SK-N-SH (cell line): ENCODE measurements at regions of chr6 and their contacts with region 1.

Region 1: DNA sequence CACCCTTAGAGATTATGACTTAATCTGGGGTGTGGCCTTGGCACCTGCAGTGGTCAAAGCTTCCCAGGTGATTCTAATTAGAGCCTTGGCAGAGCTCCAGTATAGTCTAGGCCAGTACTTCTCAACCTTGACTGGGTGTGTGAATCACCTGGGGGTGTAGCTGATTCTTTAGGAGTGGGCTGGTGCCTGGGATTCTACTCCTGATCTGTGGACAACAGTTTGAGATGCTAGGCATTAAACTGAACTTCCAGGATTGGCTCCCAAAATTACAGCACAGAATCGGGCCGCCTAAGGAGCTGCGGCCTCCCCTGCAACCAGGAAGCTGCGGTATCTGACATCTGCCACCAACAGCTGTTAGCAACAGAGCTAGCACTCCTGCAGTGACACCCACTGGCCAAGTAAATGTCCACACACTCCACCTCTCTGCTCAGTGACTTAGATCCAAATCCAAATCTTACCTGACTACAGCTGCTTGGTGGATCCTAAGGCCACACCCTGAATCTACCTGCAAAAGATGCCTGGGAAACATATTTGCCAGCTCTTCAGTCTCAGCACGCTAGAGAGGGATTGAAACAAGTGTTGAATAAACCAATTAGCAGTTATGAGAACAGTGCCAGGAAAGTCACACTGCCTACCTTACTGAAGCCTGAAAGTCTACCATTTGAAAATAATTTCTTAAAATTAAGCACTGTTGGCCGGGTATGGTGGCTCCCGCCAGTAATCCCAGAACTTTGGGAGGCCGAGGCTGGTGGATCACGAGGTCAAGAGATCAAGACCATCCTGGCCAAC is 126.7 kb downstream of the UNC5CL start:
- DNase-seq: peak; percentile 81
- H3K4me3 ChIP-seq: no peak overlapping the region; a peak in 1 of 4 replicates
- H3K27ac ChIP-seq: no peak overlapping the region; a peak in 1 of 4 replicates
- H3K4me1 ChIP-seq: peaks cover 4 to 9% of the 10 kb centered on the region in 2 experiments; a peak in 2 of 4 replicates
- H3K27me3 ChIP-seq: no peaks in the 10 kb centered on the region
- CTCF ChIP-seq: peak; percentile 48
- EP300 ChIP-seq: no peak
- RAD21 ChIP-seq: peak; percentile 93

Region 2: GRCh38 chr6:40719671-40720374 is 192.5 kb before region 1 on chr6:
- CTCF ChIA-PET with region 1: interaction called, 10 read pairs
- POLR2A ChIA-PET with region 1: no interaction called
- DNase-seq: peak; percentile 56
- H3K4me3 ChIP-seq: peak overlapping the region in 1 of 2 experiments; percentile 13; a peak in 2 of 4 replicates
- H3K27ac ChIP-seq: peak overlapping the region; percentile 47 to 99
- H3K4me1 ChIP-seq: peaks cover 15 to 70% of the 10 kb centered on the region in 2 experiments; a peak in 3 of 4 replicates
- H3K27me3 ChIP-seq: no peaks in the 10 kb centered on the region
- CTCF ChIP-seq: no peak
- EP300 ChIP-seq: peak in 1 of 2 experiments; percentile 80; a peak in 2 of 4 replicates
- RAD21 ChIP-seq: no peak; the same call in none of the 2 replicates

Region 3: GRCh38 chr6:40894962-40895799 is 17.2 kb before region 1 on chr6:
- CTCF ChIA-PET with region 1: interaction called, 26 read pairs
- POLR2A ChIA-PET with region 1: no interaction called
- DNase-seq: peak; percentile 36
- H3K4me3 ChIP-seq: no peak overlapping the region
- H3K27ac ChIP-seq: no peak overlapping the region
- H3K4me1 ChIP-seq: peaks cover 0 to 6% of the 10 kb centered on the region in 2 experiments; a peak in 1 of 4 replicates
- H3K27me3 ChIP-seq: no peaks in the 10 kb centered on the region
- CTCF ChIP-seq: peak; percentile 68
- EP300 ChIP-seq: no peak
- RAD21 ChIP-seq: peak; percentile 54

Region 4: DNA sequence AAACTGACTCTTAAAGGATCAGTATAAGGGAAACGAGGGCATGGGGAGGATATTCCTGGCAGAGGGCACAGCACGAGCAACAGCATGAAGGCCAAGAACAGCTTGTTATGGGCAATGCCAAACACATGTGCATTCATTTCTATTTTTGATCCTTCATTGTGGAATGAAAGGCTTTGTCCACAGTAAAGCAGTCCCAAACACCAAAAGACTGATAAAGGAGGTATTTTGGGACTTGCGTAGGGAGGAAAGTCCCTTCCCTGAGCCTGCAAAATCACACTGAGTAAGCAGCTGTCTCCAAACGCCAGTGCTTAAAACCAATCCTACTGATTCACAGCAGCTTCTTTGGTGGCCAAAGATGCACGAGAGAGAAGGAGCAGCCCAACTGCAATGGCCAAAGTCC is 11.6 kb before region 1 on chr6:
- CTCF ChIA-PET with region 1: interaction called, 26 read pairs
- POLR2A ChIA-PET with region 1: no interaction called
- DNase-seq: no peak
- H3K4me3 ChIP-seq: no peak overlapping the region
- H3K27ac ChIP-seq: no peak overlapping the region
- H3K4me1 ChIP-seq: no peaks in the 10 kb centered on the region
- H3K27me3 ChIP-seq: no peaks in the 10 kb centered on the region
- CTCF ChIP-seq: no peak
- EP300 ChIP-seq: no peak
- RAD21 ChIP-seq: no peak

Region 5: DNA sequence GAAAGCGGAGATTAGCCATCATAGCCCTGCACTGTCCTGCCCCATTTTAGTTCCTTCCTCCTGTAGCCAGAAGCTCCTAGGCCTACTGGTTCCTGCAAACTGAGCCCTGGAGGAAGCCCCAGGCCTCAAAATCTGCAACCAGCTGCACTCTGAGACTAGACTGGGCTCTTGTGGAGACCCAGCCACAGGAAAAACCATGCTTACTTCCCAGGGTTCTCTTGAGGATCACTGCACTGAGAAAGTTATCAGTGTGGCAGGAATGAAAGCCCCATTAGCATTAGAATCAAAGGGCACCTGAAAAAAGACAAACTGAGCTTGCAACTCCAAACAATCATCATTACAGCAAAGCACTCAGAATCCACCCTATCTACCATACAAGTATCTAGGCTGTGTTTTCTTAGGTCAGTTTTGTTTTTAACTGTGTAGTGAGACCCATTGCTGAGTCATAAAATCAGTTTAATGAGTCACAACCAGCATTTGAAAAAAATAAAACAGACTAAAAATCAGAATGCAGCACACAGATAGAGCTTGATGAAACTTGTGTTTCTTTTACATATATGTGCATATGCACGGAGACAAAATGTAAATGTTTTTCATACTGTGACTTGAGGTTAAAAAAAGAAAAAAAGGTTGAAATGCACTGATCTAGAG is 35.6 kb after region 1 on chr6:
- CTCF ChIA-PET with region 1: no interaction called
- POLR2A ChIA-PET with region 1: no interaction called
- DNase-seq: no peak
- H3K4me3 ChIP-seq: no peak overlapping the region
- H3K27ac ChIP-seq: peak overlapping the region in 1 of 2 experiments; percentile 70; a peak in 2 of 4 replicates
- H3K4me1 ChIP-seq: peaks cover 2 to 33% of the 10 kb centered on the region in 2 experiments
- H3K27me3 ChIP-seq: no peaks in the 10 kb centered on the region
- CTCF ChIP-seq: no peak
- EP300 ChIP-seq: no peak; a peak in 1 of 4 replicates
- RAD21 ChIP-seq: no peak